Panc1 (cell line): ENCODE measurements at regions of chr19 and their contacts with region 1.

Region 1: DNA sequence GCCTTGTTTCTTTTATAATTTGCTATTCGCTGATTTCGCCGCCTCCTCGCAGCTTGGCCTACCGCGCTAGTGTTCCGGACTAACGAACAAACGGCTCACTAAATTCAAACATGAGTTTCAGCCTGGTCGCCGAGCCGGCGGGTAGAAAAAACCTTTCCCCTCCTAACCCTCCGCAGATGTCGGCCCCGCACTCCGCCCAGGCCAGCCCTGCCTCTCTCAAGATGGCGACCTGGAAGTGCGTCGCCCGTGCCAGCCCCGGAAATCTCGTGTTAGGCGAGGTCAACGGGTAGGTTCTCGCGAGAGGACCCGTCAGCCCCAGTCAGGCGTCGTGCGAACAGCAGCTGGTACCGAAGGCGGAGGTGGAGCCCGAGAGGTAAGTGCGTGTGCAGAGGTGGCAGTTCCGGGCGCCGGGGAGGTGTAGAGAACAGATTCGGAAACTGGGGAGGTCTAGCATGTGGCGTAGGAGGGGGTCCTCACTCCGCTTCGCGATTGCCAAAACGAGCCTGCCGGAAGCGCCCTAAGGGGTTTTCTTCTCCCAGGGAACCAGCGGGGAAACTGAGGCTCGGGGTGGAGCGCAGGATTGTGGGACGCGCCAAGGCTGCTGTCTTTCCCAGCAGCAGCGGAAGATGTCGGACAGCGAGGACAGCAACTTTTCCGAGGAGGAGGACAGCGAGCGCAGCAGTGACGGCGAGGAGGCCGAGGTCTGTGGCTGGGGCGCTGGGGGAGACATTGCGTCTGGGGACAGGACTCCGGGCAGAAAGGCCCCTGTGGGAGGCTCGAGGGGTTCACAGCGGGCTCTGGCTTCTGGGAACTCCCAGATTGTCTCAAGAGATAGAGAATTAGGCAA is at the start of gene SUPT5H:
- DNase-seq: peak; percentile 100
- ATAC-seq: peak; percentile 94
- H3K4me3 ChIP-seq: peak within 1 kb of the TSS; percentile 34 to 56
- H3K27ac ChIP-seq: peak within 1 kb of the TSS; percentile 85
- H3K4me1 ChIP-seq: peaks cover 32% of the 10 kb centered on the region
- H3K27me3 ChIP-seq: no peaks in the 10 kb centered on the region
- CTCF ChIP-seq: no peak
- total RNA-seq, gene SUPT5H: 1,614 TPM

Region 2: GRCh38 chr19:39341719-39342604 is 103.5 kb before region 1 on chr19 and contains the start of gene SAMD4B:
- CTCF ChIA-PET with region 1: interaction called, 16 read pairs
- POLR2A ChIA-PET with region 1: interaction called, 28 read pairs
- in situ Hi-C with region 1: no loop called
- intact Hi-C with region 1: no loop called
- DNase-seq: peak; percentile 100
- ATAC-seq: peak; percentile 94
- H3K4me3 ChIP-seq: peak within 1 kb of the TSS; percentile 39 to 60
- H3K27ac ChIP-seq: peak within 1 kb of the TSS; percentile 88
- H3K4me1 ChIP-seq: peaks cover 40% of the 10 kb centered on the region
- H3K27me3 ChIP-seq: no peaks in the 10 kb centered on the region
- CTCF ChIP-seq: no peak
- total RNA-seq, gene SAMD4B: 1,339 TPM

Region 3: DNA sequence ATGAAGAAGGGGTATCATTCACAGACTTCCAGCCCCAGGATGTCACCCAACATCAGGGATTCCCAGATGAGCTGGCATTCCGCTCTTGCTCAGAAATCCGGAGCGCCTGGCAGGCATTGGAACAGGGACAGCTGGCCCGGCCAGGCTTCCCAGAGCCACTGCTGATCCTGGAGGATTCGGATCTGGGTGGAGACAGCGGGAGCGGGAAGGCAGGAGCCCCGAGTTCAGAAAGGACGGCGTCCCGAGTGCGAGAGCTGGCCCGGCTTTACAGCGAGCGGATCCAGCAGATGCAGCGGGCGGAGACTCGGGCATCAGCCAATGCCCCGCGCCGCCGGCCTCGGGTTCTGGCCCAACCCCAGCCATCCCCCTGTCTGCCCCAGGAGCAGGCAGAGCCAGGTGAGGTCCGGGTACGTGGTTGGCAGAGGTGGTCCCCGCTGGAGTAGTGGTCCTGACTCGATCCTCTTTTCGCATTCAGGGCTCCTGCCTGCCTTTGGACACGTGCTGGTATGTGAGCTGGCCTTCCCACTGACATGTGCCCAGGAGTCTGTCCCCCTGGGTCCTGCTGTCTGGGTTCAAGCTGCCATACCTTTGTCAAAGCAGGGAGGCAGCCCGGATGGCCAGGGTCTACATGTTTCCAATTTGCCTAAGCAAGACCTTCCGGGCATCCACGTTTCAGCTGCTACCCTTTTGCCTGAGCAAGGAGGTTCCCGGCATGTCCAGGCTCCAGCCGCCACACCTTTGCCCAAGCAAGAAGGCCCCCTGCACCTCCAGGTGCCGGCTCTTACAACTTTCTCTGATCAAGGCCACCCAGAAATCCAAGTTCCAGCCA is 22.0 kb before region 1 on chr19:
- CTCF ChIA-PET with region 1: interaction called, 64 read pairs
- POLR2A ChIA-PET with region 1: interaction called, 21 read pairs
- in situ Hi-C with region 1: no loop called
- intact Hi-C with region 1: no loop called
- DNase-seq: no peak
- ATAC-seq: no peak
- H3K4me3 ChIP-seq: no peak overlapping the region
- H3K27ac ChIP-seq: peak overlapping the region; percentile 3
- H3K4me1 ChIP-seq: peaks cover 24% of the 10 kb centered on the region
- H3K27me3 ChIP-seq: no peaks in the 10 kb centered on the region
- CTCF ChIP-seq: no peak

Region 4: GRCh38 chr19:39480337-39481228 is 35.1 kb after region 1 on chr19 and contains the start of gene TIMM50:
- CTCF ChIA-PET with region 1: interaction called, 91 read pairs
- POLR2A ChIA-PET with region 1: interaction called, 23 read pairs
- in situ Hi-C with region 1: no loop called
- intact Hi-C with region 1: no loop called
- DNase-seq: peak; percentile 100
- ATAC-seq: peak; percentile 96
- H3K4me3 ChIP-seq: peak within 1 kb of the TSS; percentile 39 to 55
- H3K27ac ChIP-seq: peak within 1 kb of the TSS; percentile 86
- H3K4me1 ChIP-seq: peaks cover 23% of the 10 kb centered on the region
- H3K27me3 ChIP-seq: no peaks in the 10 kb centered on the region
- CTCF ChIP-seq: no peak
- total RNA-seq, gene TIMM50: 1,837 TPM

Region 5: DNA sequence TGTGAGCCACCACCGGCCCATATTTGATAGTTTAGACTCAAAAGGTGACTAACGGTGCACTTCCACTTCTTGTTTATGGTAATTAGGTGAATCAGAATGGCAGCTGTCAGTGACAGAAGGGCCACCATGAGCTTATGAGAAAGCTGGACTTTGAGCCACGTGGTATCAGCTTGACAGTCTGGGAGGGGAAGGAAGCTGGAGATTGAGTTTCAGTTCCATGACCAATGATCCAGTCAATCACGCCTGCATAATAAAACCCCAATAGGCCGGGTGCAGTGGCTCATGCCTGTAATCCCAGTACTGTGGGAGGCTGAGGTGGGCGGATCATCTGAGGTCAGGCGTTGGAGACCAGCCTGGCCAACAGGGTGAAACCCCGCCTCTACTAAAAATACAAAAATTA is 79.0 kb after region 1 on chr19:
- CTCF ChIA-PET with region 1: interaction called, 49 read pairs
- POLR2A ChIA-PET with region 1: interaction called, 17 read pairs
- in situ Hi-C with region 1: no loop called
- intact Hi-C with region 1: no loop called
- DNase-seq: no peak
- ATAC-seq: peak; percentile 1; the same call in 1 of the 2 replicates
- H3K4me3 ChIP-seq: no peak overlapping the region
- H3K27ac ChIP-seq: no peak overlapping the region
- H3K4me1 ChIP-seq: peaks cover 3% of the 10 kb centered on the region; the same call in 1 of the 2 replicates
- H3K27me3 ChIP-seq: no peaks in the 10 kb centered on the region
- CTCF ChIP-seq: no peak

Region 6: DNA sequence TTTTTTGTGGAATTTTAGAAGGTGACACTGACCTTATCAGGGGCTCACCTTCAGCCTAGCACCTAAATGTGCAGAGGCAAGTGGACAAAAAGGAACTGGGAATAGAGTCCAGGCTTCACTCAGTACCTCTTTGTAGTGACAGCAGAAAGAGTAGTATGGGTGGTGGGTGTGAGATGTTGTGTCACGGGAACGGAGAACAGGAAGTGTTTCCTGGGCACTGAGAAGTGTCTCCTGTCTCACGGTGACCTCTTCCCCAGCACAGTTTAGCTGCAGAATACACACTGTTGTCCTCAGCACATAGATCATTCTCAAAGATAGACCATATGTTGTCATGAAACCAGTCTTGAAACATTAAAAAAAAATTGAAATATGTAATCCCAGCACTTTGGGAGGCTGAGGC is 241.3 kb after region 1 on chr19:
- CTCF ChIA-PET with region 1: no interaction called
- POLR2A ChIA-PET with region 1: interaction called, 11 read pairs
- in situ Hi-C with region 1: no loop called
- intact Hi-C with region 1: no loop called
- DNase-seq: no peak
- ATAC-seq: no peak
- H3K4me3 ChIP-seq: no peak overlapping the region
- H3K27ac ChIP-seq: no peak overlapping the region
- H3K4me1 ChIP-seq: no peaks in the 10 kb centered on the region
- H3K27me3 ChIP-seq: peaks cover 67% of the 10 kb centered on the region
- CTCF ChIP-seq: no peak

Region 7: DNA sequence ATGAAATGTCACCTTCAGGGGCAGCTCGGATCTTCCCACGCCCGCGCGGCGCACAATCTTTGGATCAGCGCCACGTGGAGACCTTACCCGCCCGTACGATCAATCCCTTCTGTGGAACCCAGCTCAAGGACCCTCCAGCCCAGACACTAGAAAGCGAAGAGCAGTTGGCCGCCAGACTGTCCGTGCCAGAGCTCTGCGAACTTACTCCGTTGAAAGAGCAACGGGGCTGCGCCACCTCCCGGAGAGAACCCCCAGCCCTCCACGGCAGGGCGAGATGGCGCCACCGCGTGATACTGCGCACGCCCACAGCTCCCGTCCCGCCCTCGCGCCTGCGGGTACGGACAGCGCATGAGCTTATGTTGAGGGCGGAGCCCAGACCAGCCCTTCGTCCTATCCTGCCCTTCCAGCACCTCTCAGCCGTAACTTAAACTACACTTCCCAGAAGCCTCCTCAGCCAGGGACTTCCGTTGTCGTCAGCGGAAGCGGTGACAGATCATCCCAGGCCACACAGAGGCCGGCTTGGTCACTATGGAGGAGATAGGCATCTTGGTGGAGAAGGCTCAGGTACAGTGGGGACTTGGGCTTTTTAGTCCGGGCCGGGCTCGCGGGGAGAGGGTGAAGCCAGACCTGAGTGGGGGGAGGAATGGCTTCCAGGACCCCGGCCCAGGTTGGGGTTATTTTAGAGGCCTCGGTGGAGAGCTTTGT is 525.3 kb after region 1 on chr19 and contains the start of gene PSMC4:
- CTCF ChIA-PET with region 1: interaction called, 10 read pairs
- POLR2A ChIA-PET with region 1: interaction called, 5 read pairs
- in situ Hi-C with region 1: no loop called
- intact Hi-C with region 1: no loop called
- DNase-seq: peak; percentile 100
- ATAC-seq: peak; percentile 98
- H3K4me3 ChIP-seq: peak within 1 kb of the TSS; percentile 35 to 50
- H3K27ac ChIP-seq: peak within 1 kb of the TSS; percentile 82
- H3K4me1 ChIP-seq: peaks cover 17% of the 10 kb centered on the region
- H3K27me3 ChIP-seq: no peaks in the 10 kb centered on the region
- CTCF ChIP-seq: no peak
- total RNA-seq, gene PSMC4: 2,386 TPM